ENCODE measurements at regions of chr17 and their contacts with region 1.

Region 1: DNA sequence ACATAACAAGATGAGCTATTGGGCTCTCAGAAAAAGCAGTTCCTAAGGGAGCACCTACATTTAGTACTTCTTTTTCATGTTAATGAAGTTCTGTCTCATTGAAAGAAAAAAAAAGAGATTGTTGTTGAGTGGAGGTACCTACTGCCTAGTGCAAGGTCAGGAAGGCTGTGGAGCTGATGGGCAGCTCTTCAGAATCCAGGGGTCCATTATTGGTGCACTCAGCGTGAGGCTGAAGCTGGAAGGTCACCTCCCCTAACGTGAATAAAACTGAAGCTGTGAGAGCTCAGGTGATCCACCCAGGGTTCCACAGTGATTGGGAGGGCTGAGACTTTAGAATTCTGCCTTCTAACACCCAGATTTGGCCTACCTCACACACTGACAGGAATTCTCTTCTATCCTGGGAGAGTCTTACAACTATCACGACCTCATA is 153.9 kb upstream of the TBX2 start:
- DNase-seq: no peak
- ATAC-seq: no peak
- H3K4me3 ChIP-seq: no peak overlapping the region
- H3K27ac ChIP-seq: peak overlapping the region; percentile 58; the same call in 1 of the 2 replicates
- H3K4me1 ChIP-seq: 0 out of 2 replicates have a peak, but pooled peaks cover 2% of the 10 kb centered on the region
- H3K27me3 ChIP-seq: no peaks in the 10 kb centered on the region
- CTCF ChIP-seq: no peak

Region 2: GRCh38 chr17:61202564-61202963 is 43.2 kb before region 1 on chr17:
- CTCF ChIA-PET with region 1: no interaction called
- POLR2A ChIA-PET with region 1: interaction called, 17 read pairs
- in situ Hi-C with region 1: no loop called
- intact Hi-C with region 1: no loop called
- DNase-seq: no peak
- ATAC-seq: no peak
- H3K4me3 ChIP-seq: no peak overlapping the region
- H3K27ac ChIP-seq: peak overlapping the region; percentile 91
- H3K4me1 ChIP-seq: peaks cover 34% of the 10 kb centered on the region
- H3K27me3 ChIP-seq: no peaks in the 10 kb centered on the region
- CTCF ChIP-seq: no peak

Region 3: DNA sequence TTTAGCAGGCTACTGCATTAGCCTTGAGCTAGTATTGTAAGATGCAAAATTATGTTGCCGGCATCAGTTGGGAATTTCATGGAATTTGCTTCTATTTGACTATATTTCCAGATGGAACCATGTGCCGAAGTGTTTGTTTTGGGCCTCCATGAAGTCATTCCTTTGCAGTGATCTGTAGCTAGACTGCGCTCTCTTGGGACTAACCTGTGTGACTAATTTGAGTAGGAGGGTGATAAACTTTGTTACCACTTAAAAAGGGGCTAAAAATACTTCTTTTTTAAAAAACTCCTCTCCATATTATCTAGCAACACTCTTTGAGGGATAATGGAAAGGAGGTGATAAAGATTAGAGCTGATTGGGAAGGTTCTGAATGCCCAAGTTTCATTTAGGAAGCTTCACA is 12.8 kb before region 1 on chr17:
- CTCF ChIA-PET with region 1: no interaction called
- POLR2A ChIA-PET with region 1: no interaction called
- in situ Hi-C with region 1: no loop called
- intact Hi-C with region 1: no loop called
- DNase-seq: no peak
- ATAC-seq: no peak
- H3K4me3 ChIP-seq: no peak overlapping the region
- H3K27ac ChIP-seq: peak overlapping the region; percentile 87
- H3K4me1 ChIP-seq: peaks cover 25% of the 10 kb centered on the region
- H3K27me3 ChIP-seq: no peaks in the 10 kb centered on the region
- CTCF ChIP-seq: no peak

Region 4: GRCh38 chr17:61259360-61259759 is 13.6 kb after region 1 on chr17:
- CTCF ChIA-PET with region 1: no interaction called
- POLR2A ChIA-PET with region 1: interaction called, 11 read pairs
- in situ Hi-C with region 1: no loop called
- intact Hi-C with region 1: no loop called
- DNase-seq: no peak
- ATAC-seq: no peak
- H3K4me3 ChIP-seq: no peak overlapping the region
- H3K27ac ChIP-seq: peak overlapping the region; percentile 54; the same call in 1 of the 2 replicates
- H3K4me1 ChIP-seq: no peaks in the 10 kb centered on the region
- H3K27me3 ChIP-seq: no peaks in the 10 kb centered on the region
- CTCF ChIP-seq: no peak

Region 5: GRCh38 chr17:61349350-61349749 is 103.6 kb after region 1 on chr17:
- CTCF ChIA-PET with region 1: no interaction called
- POLR2A ChIA-PET with region 1: no interaction called
- in situ Hi-C with region 1: no loop called
- intact Hi-C with region 1: no loop called
- DNase-seq: no peak
- ATAC-seq: no peak
- H3K4me3 ChIP-seq: no peak overlapping the region
- H3K27ac ChIP-seq: no peak overlapping the region; the same call in 1 of the 2 replicates
- H3K4me1 ChIP-seq: peaks cover 14% of the 10 kb centered on the region
- H3K27me3 ChIP-seq: no peaks in the 10 kb centered on the region
- CTCF ChIP-seq: no peak; the same call in 1 of the 2 replicates

Measured in Panc1 (cell line).